Natural killer cell (primary cell): ENCODE measurements at regions of chr5 and their contacts with region 1.

Region 1: DNA sequence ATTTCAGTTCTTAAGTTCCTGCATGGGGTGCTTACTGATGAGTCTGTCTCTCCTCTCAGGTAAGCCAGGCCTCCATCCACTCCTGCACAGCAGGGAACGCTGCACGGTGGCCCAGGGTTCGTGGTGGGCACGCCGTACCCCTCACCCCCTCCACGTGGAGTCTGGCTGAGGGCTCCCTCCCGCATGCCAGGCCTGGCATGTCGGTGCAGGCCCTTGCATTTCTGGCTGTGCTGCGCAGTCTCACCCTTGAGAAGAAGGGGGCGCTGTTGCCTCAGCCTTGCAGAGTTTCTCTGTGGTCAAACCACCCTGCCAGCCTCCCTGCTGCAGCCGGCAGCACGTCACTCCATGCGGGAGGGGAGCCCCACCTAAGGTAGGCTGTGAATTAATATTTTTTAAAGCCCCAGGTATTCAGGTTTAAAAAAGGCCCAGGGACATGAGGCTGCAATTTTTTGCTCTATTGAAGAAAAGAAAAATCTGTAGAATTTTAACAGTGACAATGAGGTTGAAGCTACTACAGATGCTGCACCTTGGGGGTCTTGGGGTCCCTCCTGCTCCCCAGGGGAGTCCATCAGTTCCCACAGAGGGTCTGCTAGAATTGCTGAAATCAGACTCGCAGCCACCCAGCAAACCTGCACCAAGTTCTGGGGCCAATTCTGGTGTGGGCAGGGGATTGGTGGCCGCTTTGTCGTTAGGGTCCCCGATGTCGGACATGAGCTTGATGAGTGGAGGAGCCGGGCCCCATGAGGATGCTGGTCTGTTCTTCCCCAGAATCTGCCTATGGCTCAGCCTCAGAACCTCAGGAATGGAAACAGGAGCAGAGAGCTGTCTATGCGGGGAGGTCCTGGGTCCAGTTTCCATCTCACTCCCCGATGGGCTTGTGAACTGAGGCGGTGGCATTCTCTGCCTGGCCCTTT is 52.6 kb downstream of the TENT4A start:
- DNase-seq: peak; percentile 55 to 71
- ATAC-seq: peak; percentile 77 to 87 (median 81)
- H3K4me3 ChIP-seq: no peak overlapping the region
- H3K4me3 Mint-ChIP-seq: no peak overlapping the region
- H3K27ac ChIP-seq: no peak overlapping the region
- H3K27ac Mint-ChIP-seq: no peak overlapping the region
- H3K4me1 ChIP-seq: peaks cover 18% of the 10 kb centered on the region
- H3K4me1 Mint-ChIP-seq: peaks cover 7 to 8% of the 10 kb centered on the region in 2 donors
- H3K27me3 ChIP-seq: no peaks in the 10 kb centered on the region
- H3K27me3 Mint-ChIP-seq: no peaks in the 10 kb centered on the region
- CTCF ChIP-seq: peak; percentile 83

Region 2: DNA sequence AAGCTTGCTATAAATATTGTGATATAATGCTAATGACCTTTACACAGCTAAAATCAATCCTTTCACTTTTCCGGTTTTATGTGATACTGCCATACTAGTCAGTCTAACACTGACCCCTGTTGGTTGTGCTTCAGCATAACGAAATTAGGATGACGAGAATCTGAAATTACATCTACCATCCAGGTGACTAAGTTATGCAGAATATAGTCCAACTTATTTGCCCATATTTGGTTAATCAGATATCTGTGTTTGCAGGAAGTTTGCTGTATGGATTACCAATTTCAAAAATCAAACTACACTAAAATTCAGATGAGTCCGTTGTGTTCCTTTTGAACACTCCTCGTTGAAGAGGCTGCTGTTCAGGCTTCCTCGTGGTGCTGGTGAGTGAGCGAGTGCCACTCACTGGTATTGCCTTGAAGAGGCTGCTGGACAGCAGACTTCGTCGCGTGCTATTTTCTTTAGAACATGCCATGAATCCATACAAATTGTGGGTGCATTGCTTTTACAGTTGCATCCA is 20.1 kb before region 1 on chr5:
- intact Hi-C with region 1: no loop called
- DNase-seq: peak in 1 of 2 donors; percentile 78
- ATAC-seq: peak; percentile 65 to 71 (median 67)
- H3K4me3 ChIP-seq: no peak overlapping the region
- H3K4me3 Mint-ChIP-seq: no peak overlapping the region
- H3K27ac ChIP-seq: no peak overlapping the region
- H3K27ac Mint-ChIP-seq: no peak overlapping the region
- H3K4me1 ChIP-seq: peaks cover 8% of the 10 kb centered on the region
- H3K4me1 Mint-ChIP-seq: peaks cover 4 to 6% of the 10 kb centered on the region in 2 donors
- H3K27me3 ChIP-seq: no peaks in the 10 kb centered on the region
- H3K27me3 Mint-ChIP-seq: no peaks in the 10 kb centered on the region
- CTCF ChIP-seq: peak; percentile 70

Region 3: DNA sequence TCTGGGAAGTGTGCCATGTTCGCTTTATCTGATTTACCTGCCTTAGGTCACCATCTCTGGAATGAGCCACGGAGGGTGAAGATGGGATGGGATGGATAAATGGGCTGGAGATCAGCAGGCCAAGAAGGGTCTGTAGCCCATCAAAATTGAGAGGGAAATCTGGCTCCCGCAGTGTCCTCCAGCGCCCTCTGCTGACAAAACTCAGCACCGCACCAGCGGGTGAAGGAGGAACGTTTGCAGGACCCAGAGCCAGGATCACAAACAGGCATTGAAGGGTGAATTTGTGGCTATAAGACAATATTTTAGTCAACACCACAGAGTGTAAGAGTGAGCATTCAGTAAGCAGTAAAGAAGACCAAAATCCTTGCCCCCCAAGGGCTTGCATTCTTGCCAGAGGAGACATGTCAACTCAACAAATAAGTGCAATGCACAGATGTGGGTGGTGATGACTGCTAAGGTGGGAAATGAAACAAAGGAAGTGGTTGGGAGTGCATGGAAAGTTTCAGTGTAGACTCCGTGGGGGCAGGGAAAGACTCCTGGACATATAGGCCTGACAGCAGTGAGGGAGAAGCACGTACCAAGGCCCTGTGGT is 71.7 kb after region 1 on chr5:
- intact Hi-C with region 1: loop called (anchors 5 kb)
- DNase-seq: peak in 1 of 2 donors; percentile 20
- ATAC-seq: no peak
- H3K4me3 ChIP-seq: no peak overlapping the region
- H3K4me3 Mint-ChIP-seq: no peak overlapping the region
- H3K27ac ChIP-seq: no peak overlapping the region
- H3K27ac Mint-ChIP-seq: no peak overlapping the region
- H3K4me1 ChIP-seq: no peaks in the 10 kb centered on the region
- H3K4me1 Mint-ChIP-seq: peaks cover 5 to 11% of the 10 kb centered on the region in 2 donors
- H3K27me3 ChIP-seq: no peaks in the 10 kb centered on the region
- H3K27me3 Mint-ChIP-seq: peaks cover 7 to 20% of the 10 kb centered on the region in 2 donors
- CTCF ChIP-seq: peak; percentile 19

Region 4: DNA sequence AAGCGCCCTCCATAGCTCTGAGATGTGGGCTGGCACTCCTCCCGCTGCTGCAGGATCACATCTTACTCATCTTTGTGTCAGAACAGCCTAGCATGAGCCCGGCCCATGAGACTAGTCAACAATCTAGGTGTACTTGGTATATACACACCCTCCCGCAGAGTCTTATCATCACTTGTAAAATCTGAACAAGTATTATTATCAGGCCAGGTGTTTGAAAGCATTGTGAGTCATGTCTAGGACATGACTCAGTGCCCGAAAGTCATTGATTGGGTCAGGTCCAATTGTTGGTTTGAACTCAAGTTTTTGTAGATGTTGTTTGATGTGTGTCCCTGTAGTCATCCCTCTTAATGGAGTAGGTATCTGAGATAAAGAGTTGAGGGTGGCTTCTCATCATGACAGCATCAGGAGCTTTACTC is 976.4 kb after region 1 on chr5:
- intact Hi-C with region 1: loop called (anchors 5 kb)
- DNase-seq: no peak
- ATAC-seq: no peak
- H3K4me3 ChIP-seq: no peak overlapping the region
- H3K4me3 Mint-ChIP-seq: no peak overlapping the region
- H3K27ac ChIP-seq: no peak overlapping the region
- H3K27ac Mint-ChIP-seq: no peak overlapping the region
- H3K4me1 ChIP-seq: no peaks in the 10 kb centered on the region
- H3K4me1 Mint-ChIP-seq: no peaks in the 10 kb centered on the region
- H3K27me3 ChIP-seq: no peaks in the 10 kb centered on the region
- H3K27me3 Mint-ChIP-seq: peaks cover 0 to 5% of the 10 kb centered on the region in 2 donors
- CTCF ChIP-seq: no peak

Region 5: DNA sequence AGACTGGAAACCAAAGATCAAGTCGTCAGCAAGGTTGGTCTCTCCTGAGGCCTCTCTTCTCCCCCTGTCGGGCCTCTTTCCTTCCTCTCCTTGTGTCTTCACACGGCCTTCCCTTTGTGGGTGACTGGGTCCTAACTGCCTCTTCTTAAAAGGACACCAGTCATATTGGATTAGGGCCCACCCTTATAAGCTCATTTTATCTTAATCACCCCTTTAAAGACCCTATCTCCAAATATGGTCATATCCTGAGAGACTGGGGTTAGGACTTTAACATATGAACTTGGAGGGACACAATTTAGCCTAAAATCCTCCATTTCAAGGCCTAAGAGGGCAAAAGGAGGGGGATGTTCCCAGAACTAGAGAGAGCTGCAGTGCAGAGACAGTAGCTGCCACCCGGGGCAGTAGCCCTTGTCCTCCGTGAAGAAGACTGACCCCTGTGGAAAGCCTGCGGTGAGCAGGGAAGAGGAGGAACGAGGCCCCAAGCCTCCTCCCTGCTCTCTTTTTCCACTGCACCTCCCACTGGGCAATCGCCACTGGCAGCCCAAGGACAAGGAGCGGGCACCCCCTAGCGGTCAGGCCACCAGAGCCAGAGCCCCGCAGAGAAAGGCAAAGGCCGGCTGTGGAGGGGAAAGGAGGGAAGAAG is 1050.1 kb after region 1 on chr5:
- intact Hi-C with region 1: loop called (anchors 5 kb)
- DNase-seq: peak; percentile 43 to 64
- ATAC-seq: peak; percentile 67 to 80 (median 77)
- H3K4me3 ChIP-seq: no peak overlapping the region
- H3K4me3 Mint-ChIP-seq: no peak overlapping the region
- H3K27ac ChIP-seq: no peak overlapping the region
- H3K27ac Mint-ChIP-seq: no peak overlapping the region
- H3K4me1 ChIP-seq: peaks cover 3% of the 10 kb centered on the region
- H3K4me1 Mint-ChIP-seq: peaks cover 4 to 7% of the 10 kb centered on the region in 2 donors
- H3K27me3 ChIP-seq: no peaks in the 10 kb centered on the region
- H3K27me3 Mint-ChIP-seq: peaks cover 14 to 37% of the 10 kb centered on the region in 2 donors
- CTCF ChIP-seq: peak; percentile 61